ENCODE measurements at regions of chr11 and their contacts with region 1.

Region 1: GRCh38 chr11:103537904-103538502 is 428.8 kb downstream of the DYNC2H1 start:
- DNase-seq: peak; percentile 30
- H3K4me3 ChIP-seq: no peak overlapping the region
- H3K27ac ChIP-seq: peak overlapping the region; percentile 57 to 99; a peak in 3 of 4 replicates
- H3K4me1 ChIP-seq: peaks cover 16 to 32% of the 10 kb centered on the region in 2 experiments
- H3K27me3 ChIP-seq: no peaks in the 10 kb centered on the region
- CTCF ChIP-seq: peak; percentile 85
- EP300 ChIP-seq: peak in 1 of 2 experiments; percentile 24; a peak in 1 of 4 replicates
- RAD21 ChIP-seq: peak; percentile 65

Region 2: DNA sequence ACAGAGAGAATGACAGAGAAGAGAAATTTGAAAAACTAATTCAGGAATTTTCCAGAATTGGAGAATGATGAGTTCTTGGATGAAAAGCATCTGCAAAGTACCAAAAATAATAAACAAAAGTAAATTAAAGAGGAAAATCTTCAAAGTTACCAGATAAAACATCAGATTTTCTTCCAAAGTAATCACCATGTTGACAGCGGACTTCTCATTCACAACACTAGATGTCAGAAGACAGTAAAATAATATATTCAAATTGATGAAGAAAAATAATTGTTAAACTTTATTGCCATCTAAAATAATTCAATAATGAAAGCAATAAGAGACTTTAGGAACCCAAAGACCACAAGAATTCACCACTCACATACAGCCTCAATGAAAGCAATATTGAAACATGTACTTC is 73.6 kb before region 1 on chr11:
- CTCF ChIA-PET with region 1: interaction called, 11 read pairs
- POLR2A ChIA-PET with region 1: interaction called, 3 read pairs
- DNase-seq: no peak
- H3K4me3 ChIP-seq: no peak overlapping the region
- H3K27ac ChIP-seq: no peak overlapping the region; a peak in 1 of 4 replicates
- H3K4me1 ChIP-seq: no peaks in the 10 kb centered on the region; a peak in 2 of 4 replicates
- H3K27me3 ChIP-seq: no peaks in the 10 kb centered on the region
- CTCF ChIP-seq: peak; percentile 35
- EP300 ChIP-seq: no peak
- RAD21 ChIP-seq: no peak

Region 3: GRCh38 chr11:103552086-103552485 is 14.1 kb after region 1 on chr11:
- CTCF ChIA-PET with region 1: interaction called, 25 read pairs
- POLR2A ChIA-PET with region 1: no interaction called
- DNase-seq: no peak
- H3K4me3 ChIP-seq: no peak overlapping the region
- H3K27ac ChIP-seq: no peak overlapping the region
- H3K4me1 ChIP-seq: peaks cover 6 to 7% of the 10 kb centered on the region in 2 experiments; a peak in 3 of 4 replicates
- H3K27me3 ChIP-seq: no peaks in the 10 kb centered on the region
- CTCF ChIP-seq: no peak
- EP300 ChIP-seq: no peak
- RAD21 ChIP-seq: no peak

Region 4: DNA sequence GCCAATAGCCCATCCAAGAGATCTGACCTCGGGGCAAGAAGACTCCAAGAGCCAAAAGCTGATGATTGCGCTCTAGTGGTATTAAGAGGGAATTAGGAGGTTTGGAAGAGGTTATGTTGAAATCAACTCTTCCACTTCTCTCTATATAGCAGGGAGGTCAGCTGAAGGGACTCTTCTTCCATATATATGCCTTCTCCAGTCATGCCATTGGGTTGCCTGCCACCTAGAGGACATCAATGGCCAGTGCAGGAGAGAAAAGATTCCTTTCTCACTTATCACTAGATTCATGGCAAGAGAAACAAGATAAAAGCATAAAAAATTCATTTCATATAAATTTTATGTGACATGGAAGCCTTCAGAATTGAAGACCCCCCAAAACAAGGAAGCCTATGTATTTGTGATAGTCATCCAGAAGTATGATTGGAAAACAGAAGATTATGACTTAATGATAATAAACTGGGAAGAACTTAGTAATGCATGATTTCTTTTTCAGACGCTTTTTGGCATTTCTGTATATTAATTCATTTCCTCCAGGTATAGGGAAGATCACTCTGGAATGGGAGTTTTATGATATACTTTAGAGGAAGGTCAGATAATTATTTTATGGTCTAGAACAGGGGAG is 63.3 kb after region 1 on chr11:
- CTCF ChIA-PET with region 1: interaction called, 27 read pairs
- POLR2A ChIA-PET with region 1: interaction called, 5 read pairs
- DNase-seq: peak; percentile 47
- H3K4me3 ChIP-seq: no peak overlapping the region
- H3K27ac ChIP-seq: peak overlapping the region in 1 of 2 experiments; percentile 60; a peak in 2 of 4 replicates
- H3K4me1 ChIP-seq: no peaks in the 10 kb centered on the region
- H3K27me3 ChIP-seq: no peaks in the 10 kb centered on the region
- CTCF ChIP-seq: peak; percentile 97
- EP300 ChIP-seq: 0 out of 4 replicates have a peak, but pooled peaks of 1 of the 2 experiments have one; percentile 13
- RAD21 ChIP-seq: peak; percentile 98

Measured in SK-N-SH (cell line).